Calu3 (cell line): ENCODE measurements at regions of chr2 and their contacts with region 1.

Region 1: DNA sequence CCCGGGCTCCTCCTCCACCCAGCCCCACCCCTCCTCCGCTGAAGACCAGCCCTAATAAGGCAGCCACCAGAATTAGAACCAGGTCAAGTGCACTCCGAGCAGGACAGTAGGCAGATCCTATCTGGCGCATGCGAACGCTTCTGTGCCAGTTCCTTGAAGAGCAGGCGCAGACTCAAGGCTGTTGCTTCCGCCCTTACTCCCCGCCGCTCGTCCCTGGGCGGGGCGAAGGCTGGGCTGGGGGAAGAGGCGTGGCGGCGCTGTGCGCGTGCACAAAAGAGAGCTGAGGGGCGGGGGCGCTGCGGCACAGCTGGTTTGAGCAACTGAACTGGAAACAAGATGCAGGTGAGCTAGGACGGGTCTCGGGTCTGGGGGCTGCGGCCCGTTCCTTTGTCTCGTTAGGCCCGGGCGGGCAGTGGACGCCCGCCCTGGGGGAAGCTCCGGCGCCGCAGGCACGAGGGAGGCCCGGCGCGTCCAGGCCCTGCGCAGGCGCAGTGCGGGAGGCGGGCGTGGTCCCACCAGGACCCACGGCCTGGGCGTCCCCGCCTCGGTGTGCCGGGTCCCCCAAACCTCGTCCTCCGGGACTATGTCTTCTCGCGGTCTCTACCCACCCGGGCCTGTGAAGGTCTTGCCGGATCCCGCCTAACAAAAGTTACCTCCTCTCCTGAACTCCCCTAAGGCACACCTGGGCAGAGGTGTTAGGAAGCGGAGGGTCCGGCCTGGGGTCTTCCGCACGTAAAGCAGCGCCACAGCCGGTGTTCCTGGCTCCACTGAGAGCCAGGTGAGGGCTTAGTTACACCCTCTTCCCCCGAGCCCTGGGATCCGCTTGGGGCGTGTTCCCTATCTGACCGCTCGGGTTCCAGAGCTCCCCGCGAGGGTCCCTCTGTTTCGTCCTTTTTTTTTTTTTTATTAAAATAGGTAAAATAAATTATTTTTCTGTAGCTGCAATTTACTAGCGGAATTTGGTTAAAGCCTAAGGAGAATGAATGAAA is at the start of gene PDCL3:
- DNase-seq: peak; percentile 96
- H3K4me3 Mint-ChIP-seq: peak within 1 kb of the TSS; percentile 85
- H3K27ac Mint-ChIP-seq: peak within 1 kb of the TSS; percentile 62
- H3K4me1 Mint-ChIP-seq: no peaks in the 10 kb centered on the region
- H3K27me3 Mint-ChIP-seq: no peaks in the 10 kb centered on the region
- CTCF ChIP-seq: no peak
- total RNA-seq, gene PDCL3: 23.0 and 27.8 TPM in 2 replicates

Region 2: GRCh38 chr2:100422320-100423055 is 140.5 kb before region 1 on chr2:
- CTCF ChIA-PET with region 1: interaction called, 3 read pairs
- intact Hi-C with region 1: loop called (anchors 5 kb)
- DNase-seq: peak; percentile 60
- H3K4me3 Mint-ChIP-seq: no peak overlapping the region
- H3K27ac Mint-ChIP-seq: no peak overlapping the region
- H3K4me1 Mint-ChIP-seq: no peaks in the 10 kb centered on the region
- H3K27me3 Mint-ChIP-seq: peaks cover 39% of the 10 kb centered on the region
- CTCF ChIP-seq: peak; percentile 63

Region 3: GRCh38 chr2:100870652-100871531 is 307.9 kb after region 1 on chr2:
- CTCF ChIA-PET with region 1: no interaction called
- intact Hi-C with region 1: no loop called
- DNase-seq: no peak
- H3K4me3 Mint-ChIP-seq: no peak overlapping the region
- H3K27ac Mint-ChIP-seq: no peak overlapping the region
- H3K4me1 Mint-ChIP-seq: peaks cover 39% of the 10 kb centered on the region
- H3K27me3 Mint-ChIP-seq: no peaks in the 10 kb centered on the region
- CTCF ChIP-seq: no peak

Region 4: GRCh38 chr2:101036562-101037457 is 473.8 kb after region 1 on chr2:
- CTCF ChIA-PET with region 1: no interaction called
- intact Hi-C with region 1: no loop called
- DNase-seq: no peak
- H3K4me3 Mint-ChIP-seq: no peak overlapping the region
- H3K27ac Mint-ChIP-seq: no peak overlapping the region
- H3K4me1 Mint-ChIP-seq: peaks cover 10% of the 10 kb centered on the region
- H3K27me3 Mint-ChIP-seq: no peaks in the 10 kb centered on the region
- CTCF ChIP-seq: peak; percentile 52